ENCODE measurements at regions of chr1 and their contacts with region 1.

Region 1: DNA sequence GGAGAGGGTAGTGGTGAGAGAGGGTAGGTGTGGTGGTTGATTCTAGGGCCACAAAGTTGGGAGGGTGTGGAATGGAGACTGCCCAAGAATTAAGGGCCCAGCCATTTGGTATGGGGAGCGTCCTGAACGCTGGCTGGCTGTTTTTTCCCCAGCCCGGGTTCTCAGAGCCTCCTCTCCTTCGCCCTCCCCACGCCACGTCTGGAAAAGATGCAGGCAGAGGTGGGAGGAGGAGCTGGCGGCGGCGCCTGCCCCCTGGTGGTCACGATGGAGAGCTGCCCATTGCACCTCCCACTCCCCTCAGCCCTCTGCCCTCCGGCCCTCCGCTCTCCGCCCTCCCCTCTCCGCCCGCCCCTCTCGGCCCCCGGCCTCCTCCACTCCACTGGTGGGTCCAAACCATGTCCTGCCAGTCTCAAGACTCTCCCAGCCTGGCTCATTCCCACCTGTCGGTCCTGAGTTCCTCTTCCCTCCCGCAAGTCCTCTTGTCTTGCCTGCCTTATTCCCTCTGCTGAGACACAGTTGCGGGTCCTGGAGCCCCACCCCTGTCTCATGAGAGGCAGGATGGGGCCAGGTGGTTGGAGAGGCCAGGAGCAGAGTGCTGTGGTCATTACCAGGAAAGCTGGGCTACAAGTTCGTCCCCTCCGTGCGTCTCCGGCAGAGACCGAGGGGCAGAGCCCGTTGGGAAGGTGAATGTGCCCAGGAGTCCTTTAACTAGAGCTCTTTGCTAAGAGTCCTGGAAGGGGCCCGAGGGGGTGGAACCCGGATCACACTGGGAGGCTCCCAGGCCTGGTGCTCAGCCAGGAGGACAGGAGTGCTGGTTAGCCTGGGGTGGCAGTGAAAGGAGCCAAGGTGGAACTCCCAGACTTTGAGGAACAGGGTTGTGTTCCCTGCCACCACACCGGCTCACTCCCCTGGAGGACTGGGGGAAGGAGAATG is 22.6 kb downstream of the ETNK2 start:
- DNase-seq: peak; percentile 66
- H3K4me3 ChIP-seq: no peak overlapping the region
- H3K27ac ChIP-seq: no peak overlapping the region
- H3K4me1 ChIP-seq: peaks cover 26% of the 10 kb centered on the region
- H3K27me3 ChIP-seq: no peaks in the 10 kb centered on the region
- CTCF ChIP-seq: peak; percentile 81 to 93
- POLR2A ChIP-seq: no peak

Region 2: DNA sequence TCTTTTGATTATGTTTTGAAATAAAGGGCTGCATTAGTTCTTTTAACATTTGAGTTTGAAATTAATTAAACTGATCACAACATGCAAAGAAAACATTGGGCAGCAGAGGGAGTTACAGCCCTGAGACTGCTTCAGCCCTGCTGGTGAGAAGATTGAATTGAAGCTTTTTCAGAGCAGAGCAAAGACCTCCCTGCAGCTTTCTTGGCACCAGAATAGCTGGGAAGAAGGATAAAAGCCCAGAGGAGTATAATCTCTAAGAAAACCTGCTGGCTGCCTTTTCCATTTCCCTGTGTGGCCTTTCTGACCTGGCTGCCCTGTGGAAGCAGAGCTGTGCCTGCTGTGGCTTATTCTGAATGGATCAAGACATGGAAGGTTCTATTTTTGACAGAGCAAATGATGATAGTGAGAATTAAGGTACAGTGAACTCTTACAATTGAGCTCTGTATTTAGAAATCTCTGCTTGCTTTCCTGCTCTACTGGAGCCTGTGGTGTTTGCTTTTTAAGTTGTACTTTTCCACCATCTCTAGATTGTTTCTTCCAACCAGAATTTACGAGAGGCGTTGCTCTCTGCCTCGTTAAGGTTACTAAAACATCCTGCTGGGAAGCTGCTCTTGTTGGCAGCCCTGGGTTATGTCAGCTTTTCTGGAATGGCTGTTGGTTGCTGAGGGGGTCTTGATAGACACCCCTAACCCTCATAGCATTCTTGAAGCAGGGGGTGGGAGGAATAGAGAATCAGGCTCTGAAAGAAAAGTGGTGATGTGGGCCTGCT is 257.9 kb before region 1 on chr1:
- CTCF ChIA-PET with region 1: interaction called, 903 read pairs
- POLR2A ChIA-PET with region 1: interaction called, 5 read pairs
- dilution Hi-C with region 1: loop called (anchors 25 kb)
- intact Hi-C with region 1: loop called (anchors 1 kb)
- DNase-seq: peak; percentile 82
- H3K4me3 ChIP-seq: no peak overlapping the region
- H3K27ac ChIP-seq: no peak overlapping the region
- H3K4me1 ChIP-seq: peaks cover 14% of the 10 kb centered on the region
- H3K27me3 ChIP-seq: no peaks in the 10 kb centered on the region
- CTCF ChIP-seq: peak; percentile 86 to 90
- POLR2A ChIP-seq: no peak

Region 3: GRCh38 chr1:204059970-204060369 is 69.3 kb before region 1 on chr1:
- CTCF ChIA-PET with region 1: interaction called, 10 read pairs
- POLR2A ChIA-PET with region 1: no interaction called
- dilution Hi-C with region 1: no loop called
- intact Hi-C with region 1: no loop called
- DNase-seq: no peak
- H3K4me3 ChIP-seq: no peak overlapping the region
- H3K27ac ChIP-seq: no peak overlapping the region
- H3K4me1 ChIP-seq: peaks cover 4% of the 10 kb centered on the region
- H3K27me3 ChIP-seq: peaks cover 0 to 2% of the 10 kb centered on the region in 2 experiments
- CTCF ChIP-seq: no peak
- POLR2A ChIP-seq: no peak

Region 4: DNA sequence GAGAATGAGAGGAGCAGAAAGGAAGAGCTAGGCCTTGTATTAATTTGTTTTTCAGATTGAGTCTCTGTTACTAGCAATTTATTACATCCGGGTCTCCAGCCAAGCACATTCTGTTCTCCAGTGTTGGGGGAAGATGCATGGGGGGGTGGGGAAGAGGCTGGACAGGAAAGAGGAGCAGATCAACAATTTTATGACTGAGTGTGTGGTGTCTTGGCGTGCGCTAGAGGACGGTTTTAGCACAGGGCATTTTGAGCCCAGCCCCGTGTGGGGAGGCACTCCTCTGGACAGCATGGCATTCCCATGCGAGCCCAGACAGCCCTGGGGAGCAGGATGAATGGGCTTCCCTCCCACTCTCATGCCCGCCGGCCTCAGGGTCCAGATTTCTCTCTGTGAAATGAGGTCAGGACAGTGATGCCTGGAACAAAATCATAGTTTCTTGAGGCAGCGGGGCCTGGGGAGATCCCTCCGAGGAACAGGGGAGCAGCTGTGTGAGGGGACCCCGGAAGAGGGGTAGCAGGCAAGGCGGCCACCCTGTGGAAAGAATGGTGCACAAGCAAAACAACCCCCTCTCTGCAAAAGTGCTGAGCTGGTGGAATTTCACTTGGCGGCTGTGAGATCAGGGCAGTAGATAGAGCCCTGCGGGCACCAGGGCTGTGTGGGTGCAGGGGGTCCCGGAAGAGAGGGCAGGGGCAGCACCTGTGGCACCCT is 40.0 kb before region 1 on chr1:
- CTCF ChIA-PET with region 1: interaction called, 12 read pairs
- POLR2A ChIA-PET with region 1: no interaction called
- dilution Hi-C with region 1: no loop called
- intact Hi-C with region 1: no loop called
- DNase-seq: peak; percentile 50
- H3K4me3 ChIP-seq: no peak overlapping the region
- H3K27ac ChIP-seq: peak overlapping the region; percentile 6
- H3K4me1 ChIP-seq: peaks cover 25% of the 10 kb centered on the region
- H3K27me3 ChIP-seq: no peaks in the 10 kb centered on the region
- CTCF ChIP-seq: no peak
- POLR2A ChIP-seq: no peak

Region 5: GRCh38 chr1:204151552-204152309 is 22.5 kb after region 1 on chr1 and contains the start of gene ETNK2:
- CTCF ChIA-PET with region 1: interaction called, 7 read pairs
- POLR2A ChIA-PET with region 1: no interaction called
- dilution Hi-C with region 1: no loop called
- intact Hi-C with region 1: loop called (anchors 2 kb)
- DNase-seq: peak; percentile 61
- H3K4me3 ChIP-seq: peak within 1 kb of the TSS; percentile 20 to 78 (median 53)
- H3K27ac ChIP-seq: no peak within 1 kb of the TSS
- H3K4me1 ChIP-seq: peaks cover 5% of the 10 kb centered on the region
- H3K27me3 ChIP-seq: no peaks in the 10 kb centered on the region
- CTCF ChIP-seq: no peak
- POLR2A ChIP-seq: no peak
- total RNA-seq, gene ETNK2: 13.5 and 15.5 TPM in 2 replicates

Measured in endothelial cell of umbilical vein (primary cell).